ENCODE measurements at regions of chr17 and their contacts with region 1.

Region 1: GRCh38 chr17:48724251-48725003 is 1.4 kb downstream of the PRAC2 start:
- DNase-seq: peak; percentile 71
- CTCF ChIP-seq: peak; percentile 82

Region 2: DNA sequence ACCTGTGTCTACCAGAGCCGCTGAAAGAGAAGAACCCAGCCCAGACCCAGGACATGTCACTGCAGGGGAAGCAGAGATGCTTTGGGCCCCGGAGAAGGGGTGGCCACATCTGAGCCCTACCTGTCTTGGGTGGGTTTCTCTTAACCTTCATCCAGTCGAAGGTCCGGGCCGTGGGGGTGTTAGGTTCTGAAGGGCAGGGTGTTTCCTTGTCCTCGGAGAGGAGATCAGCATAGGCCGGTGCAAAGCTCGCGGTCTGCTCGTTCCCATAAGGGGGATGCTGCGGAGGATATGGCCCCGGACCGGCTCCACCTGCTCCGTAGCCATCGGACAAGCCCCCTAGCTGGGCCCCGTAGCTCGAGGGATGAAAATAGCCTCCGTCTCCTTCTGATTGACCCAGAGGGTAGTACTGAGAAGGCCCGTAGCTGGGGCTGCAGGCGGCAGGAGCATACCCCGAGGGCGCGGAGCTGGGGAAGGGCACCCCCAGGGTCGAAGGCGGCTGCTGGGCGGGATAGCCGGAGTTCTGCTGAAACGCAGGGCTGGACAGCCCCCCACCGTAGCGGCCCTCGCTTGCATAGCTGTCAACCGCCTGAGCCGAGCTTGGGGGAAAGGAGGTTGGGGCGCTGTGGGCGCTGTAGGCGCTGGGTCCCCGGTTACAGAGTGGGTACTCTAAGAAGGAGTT is 194.1 kb before region 1 on chr17:
- CTCF ChIA-PET with region 1: no interaction called
- POLR2A ChIA-PET with region 1: no interaction called
- DNase-seq: no peak
- CTCF ChIP-seq: no peak

Region 3: GRCh38 chr17:48711102-48711501 is 13.3 kb before region 1 on chr17:
- CTCF ChIA-PET with region 1: interaction called, 34 read pairs
- POLR2A ChIA-PET with region 1: no interaction called
- DNase-seq: no peak
- CTCF ChIP-seq: no peak

Region 4: GRCh38 chr17:48747445-48748363 is 23.3 kb after region 1 on chr17:
- CTCF ChIA-PET with region 1: interaction called, 30 read pairs
- POLR2A ChIA-PET with region 1: no interaction called
- DNase-seq: no peak
- CTCF ChIP-seq: no peak

Region 5: GRCh38 chr17:48816774-48817590 is 92.6 kb after region 1 on chr17 and contains the start of gene TTLL6:
- CTCF ChIA-PET with region 1: interaction called, 11 read pairs
- POLR2A ChIA-PET with region 1: no interaction called
- DNase-seq: peak; percentile 74
- CTCF ChIP-seq: no peak